Activated B cell treated with CpG ODN at 0.5 μM for 24 hours (primary cell): ENCODE measurements at regions of chr6 and their contacts with region 1.

Region 1: DNA sequence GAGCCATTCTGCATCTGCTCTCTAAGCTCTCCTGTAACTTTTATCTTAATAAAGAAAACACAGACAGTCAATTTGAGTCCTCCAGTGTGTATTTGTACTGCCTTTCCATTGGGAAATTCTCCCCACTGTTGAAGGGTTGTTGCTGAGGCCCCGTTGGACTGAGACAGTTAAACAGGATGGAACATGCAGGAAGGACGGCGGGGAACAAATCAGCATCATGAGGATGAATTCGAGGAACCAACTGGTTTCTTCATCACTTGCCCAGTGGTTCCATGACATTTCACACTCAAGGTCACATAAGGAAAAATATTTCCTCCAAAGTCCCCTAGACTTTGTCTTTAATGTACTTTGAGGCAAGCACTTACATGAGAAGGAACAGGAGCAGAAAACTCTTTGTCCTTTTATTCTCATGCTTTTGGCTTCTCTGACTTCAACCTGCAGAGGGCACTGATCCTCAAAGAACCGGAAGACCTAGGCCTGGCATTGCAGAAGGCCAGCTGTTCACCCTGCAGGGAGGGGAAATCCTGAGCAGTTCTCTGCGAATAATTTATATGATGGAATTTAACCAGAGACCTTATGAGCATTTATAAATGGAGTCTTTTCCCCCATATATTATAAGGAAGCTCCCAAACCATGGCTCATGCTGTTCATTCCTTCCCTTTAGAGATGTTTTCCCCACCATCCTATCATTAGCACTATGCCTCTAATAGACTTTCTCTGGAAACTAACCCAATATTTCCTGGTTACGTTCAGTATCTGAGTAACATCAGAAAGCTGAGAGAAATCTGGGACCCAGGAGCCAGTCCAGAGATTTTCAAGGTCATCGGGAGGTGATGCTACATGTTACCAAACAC is 55.2 kb upstream of the ADGRF1 start:
- DNase-seq: no peak
- ATAC-seq: peak; percentile 67
- H3K4me3 Mint-ChIP-seq: no peak overlapping the region
- H3K27ac Mint-ChIP-seq: no peak overlapping the region
- H3K4me1 Mint-ChIP-seq: no peaks in the 10 kb centered on the region
- H3K27me3 Mint-ChIP-seq: no peaks in the 10 kb centered on the region
- CTCF ChIP-seq: no peak

Region 2: GRCh38 chr6:47780510-47781356 is 683.4 kb after region 1 on chr6:
- CTCF ChIA-PET with region 1: no interaction called
- POLR2A ChIA-PET with region 1: no interaction called
- intact Hi-C with region 1: loop called (anchors 1 kb)
- DNase-seq: no peak
- ATAC-seq: peak; percentile 69
- H3K4me3 Mint-ChIP-seq: no peak overlapping the region
- H3K27ac Mint-ChIP-seq: no peak overlapping the region
- H3K4me1 Mint-ChIP-seq: peaks cover 5% of the 10 kb centered on the region
- H3K27me3 Mint-ChIP-seq: peaks cover 13% of the 10 kb centered on the region
- CTCF ChIP-seq: no peak